Activated T-helper 2 cell treated with anti-CD3 and anti-CD28 coated beads, Interferon-gamma antibody, Interleukin-2, Interleukin-4, amounts not matched to agents 10 μg/mL and 5 μg/mL and 100 μg/mL, durations not matched to agents 14 hours and 24 hours and 36 hours (primary cell): ENCODE measurements at regions of chr16 and their contacts with region 1.

Region 1: DNA sequence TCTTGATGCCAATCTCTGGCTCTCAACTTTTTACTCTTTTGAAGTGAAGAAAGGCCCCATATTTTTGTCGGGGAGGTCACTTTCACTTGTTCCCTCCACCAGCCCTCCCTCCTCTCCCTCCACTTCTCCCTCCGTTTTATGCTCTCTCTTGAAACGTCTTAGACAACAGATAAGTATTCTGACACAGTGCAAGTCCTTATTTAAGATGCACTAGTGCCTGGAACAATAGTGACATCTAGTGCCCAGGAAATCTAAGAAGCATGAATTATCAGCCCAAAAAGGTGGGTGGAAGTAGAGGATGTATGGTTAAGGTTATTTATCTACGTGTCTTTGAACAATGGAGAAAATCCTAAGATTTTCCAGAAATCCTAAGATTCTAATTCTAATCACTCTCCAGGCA is 17.9 kb downstream of the PSME3IP1 start:
- DNase-seq: no peak
- H3K4me3 Mint-ChIP-seq: no peak overlapping the region
- H3K27ac Mint-ChIP-seq: no peak overlapping the region
- H3K4me1 Mint-ChIP-seq: peaks cover 3% of the 10 kb centered on the region
- H3K27me3 Mint-ChIP-seq: no peaks in the 10 kb centered on the region

Region 2: GRCh38 chr16:56964243-56965148 is 203.5 kb before region 1 on chr16:
- intact Hi-C with region 1: loop called (anchors 1 kb)
- DNase-seq: peak; percentile 89
- H3K4me3 Mint-ChIP-seq: no peak overlapping the region
- H3K27ac Mint-ChIP-seq: peak overlapping the region; percentile 36
- H3K4me1 Mint-ChIP-seq: peaks cover 18% of the 10 kb centered on the region
- H3K27me3 Mint-ChIP-seq: peaks cover 2% of the 10 kb centered on the region

Region 3: DNA sequence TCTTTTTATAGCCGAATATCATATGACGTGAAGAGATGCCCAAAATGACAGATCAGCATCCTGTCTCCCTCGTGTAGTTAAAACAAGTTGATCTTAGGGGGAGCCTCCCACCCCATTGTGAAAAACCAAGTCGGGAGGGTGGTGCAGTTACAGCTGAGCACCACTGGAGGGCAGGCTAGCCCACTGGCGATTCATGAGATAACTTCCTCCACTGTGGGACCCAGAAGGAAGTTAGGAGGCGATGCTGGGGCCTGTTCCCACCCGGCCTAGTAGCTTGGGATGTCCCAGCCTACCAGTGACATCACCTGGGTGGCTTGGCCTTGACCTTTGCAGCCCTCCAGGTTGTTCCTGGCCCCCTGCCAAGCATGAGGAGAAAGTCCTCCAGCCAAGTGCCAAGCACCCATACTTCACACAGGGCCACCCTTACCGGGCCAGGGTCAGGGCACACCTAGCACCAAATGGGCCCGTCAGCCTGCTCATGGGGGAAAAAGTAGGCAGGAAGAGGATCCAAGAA is 83.6 kb before region 1 on chr16:
- intact Hi-C with region 1: loop called (anchors 1 kb)
- DNase-seq: peak; percentile 66
- H3K4me3 Mint-ChIP-seq: no peak overlapping the region
- H3K27ac Mint-ChIP-seq: peak overlapping the region; percentile 50
- H3K4me1 Mint-ChIP-seq: peaks cover 5% of the 10 kb centered on the region
- H3K27me3 Mint-ChIP-seq: no peaks in the 10 kb centered on the region

Region 4: DNA sequence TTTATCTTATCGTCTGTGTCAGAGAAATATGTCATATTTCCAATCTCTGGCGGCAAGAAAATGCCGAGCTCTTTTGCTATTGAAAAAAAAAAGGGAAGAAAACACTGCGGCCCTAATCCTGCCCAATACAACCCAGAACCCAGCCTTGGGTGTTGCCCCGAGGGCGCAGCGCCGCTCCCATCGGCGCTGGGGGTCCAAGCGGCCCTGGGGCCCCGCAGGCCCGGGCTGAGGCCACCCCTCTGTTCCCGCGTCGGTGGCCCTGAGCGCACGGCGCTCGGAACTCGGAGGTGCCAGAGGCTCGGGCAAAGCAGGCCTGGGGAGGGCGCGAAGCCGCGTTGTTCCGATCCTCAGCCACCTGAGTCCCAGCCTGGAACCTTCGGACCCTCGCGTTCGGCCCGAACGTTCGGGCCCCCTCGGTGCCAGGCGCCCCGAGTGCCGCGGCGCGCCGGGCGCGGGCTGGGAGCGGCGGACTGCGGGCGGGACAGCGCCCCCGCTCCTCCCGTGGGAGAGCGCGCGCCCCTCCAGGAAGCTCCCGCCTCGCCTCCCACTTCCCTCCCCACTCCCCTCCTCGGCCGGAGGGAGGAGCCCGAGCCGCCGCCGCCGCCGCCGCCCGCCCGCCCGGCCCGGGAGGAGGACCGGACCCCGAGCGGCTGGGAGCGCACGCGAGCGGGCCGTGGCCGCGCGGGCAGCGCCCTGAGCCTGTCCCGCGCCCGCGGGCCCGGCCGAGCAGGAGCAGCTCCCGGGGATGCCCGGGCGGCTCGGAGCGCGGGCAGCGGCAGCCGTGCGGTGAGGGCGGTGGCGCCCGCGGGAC is 75.8 kb before region 1 on chr16 and contains the start of gene CPNE2:
- intact Hi-C with region 1: loop called (anchors 2 kb)
- DNase-seq: peak; percentile 12
- H3K4me3 Mint-ChIP-seq: peak within 1 kb of the TSS; percentile 78
- H3K27ac Mint-ChIP-seq: no peak within 1 kb of the TSS
- H3K4me1 Mint-ChIP-seq: peaks cover 6% of the 10 kb centered on the region
- H3K27me3 Mint-ChIP-seq: peaks cover 25% of the 10 kb centered on the region
- total RNA-seq, gene CPNE2: 7.6 and 9.9 TPM in 2 replicates

Region 5: GRCh38 chr16:57216968-57217367 is 49.0 kb after region 1 on chr16:
- intact Hi-C with region 1: no loop called
- DNase-seq: no peak
- H3K4me3 Mint-ChIP-seq: no peak overlapping the region
- H3K27ac Mint-ChIP-seq: no peak overlapping the region
- H3K4me1 Mint-ChIP-seq: no peaks in the 10 kb centered on the region
- H3K27me3 Mint-ChIP-seq: no peaks in the 10 kb centered on the region